Caco-2 (cell line): ENCODE measurements at regions of chr2 and their contacts with region 1.

Region 1: GRCh38 chr2:118855451-118856279 is 8.2 kb upstream of the EN1 start:
- DNase-seq: peak; percentile 65 to 86
- H3K4me3 ChIP-seq: no peak overlapping the region
- H3K4me3 Mint-ChIP-seq: no peak overlapping the region
- H3K27ac Mint-ChIP-seq: no peak overlapping the region
- H3K4me1 ChIP-seq: no peaks in the 10 kb centered on the region
- H3K4me1 Mint-ChIP-seq: no peaks in the 10 kb centered on the region
- H3K27me3 ChIP-seq: no peaks in the 10 kb centered on the region; the same call in 1 of the 2 replicates
- H3K27me3 Mint-ChIP-seq: peaks cover 41% of the 10 kb centered on the region
- CTCF ChIP-seq: peak; percentile 74 to 94

Region 2: DNA sequence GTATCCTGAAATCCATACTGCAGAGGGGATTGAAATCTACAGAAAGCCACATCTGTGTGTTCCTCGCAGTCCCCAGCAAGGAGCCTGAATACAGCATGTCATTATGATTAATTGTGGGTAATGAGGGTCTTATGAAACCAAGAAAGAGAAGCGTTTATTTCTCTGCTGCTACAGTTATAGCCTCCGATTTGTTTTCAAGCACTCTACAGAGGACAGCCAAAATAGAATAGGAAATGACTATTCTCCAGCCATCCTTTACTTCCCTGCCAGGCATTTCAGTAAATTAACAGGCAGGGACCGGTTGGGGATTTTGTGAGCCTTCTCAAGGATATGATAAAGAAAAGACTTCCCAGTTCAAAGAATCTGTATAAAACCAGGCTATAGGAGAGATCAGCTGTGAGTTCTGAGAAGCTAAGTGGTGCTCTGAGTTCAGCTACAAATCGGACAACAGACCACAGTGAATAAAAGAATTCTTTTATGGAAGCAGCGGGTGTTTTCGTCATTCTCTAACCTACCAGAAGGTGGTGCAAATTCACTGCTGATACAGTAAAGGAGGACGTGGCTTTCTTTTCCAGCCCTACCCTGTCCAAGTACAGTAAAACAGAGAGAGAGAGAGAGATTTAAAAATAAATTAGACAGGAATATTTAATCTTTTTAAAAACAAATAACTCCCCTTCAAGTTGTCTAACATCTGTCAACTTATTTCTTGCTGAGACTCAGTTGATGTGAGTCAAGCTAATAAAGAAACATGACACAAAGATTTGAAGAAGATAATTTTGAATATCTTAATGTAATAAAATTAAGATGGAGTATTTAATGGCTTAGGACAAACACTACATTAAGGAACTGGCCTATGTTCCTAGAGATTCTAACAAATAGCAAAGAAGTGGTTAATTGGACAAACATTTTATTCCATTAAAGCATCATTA is 633.7 kb before region 1 on chr2:
- CTCF ChIA-PET with region 1: no interaction called
- POLR2A ChIA-PET with region 1: no interaction called
- intact Hi-C with region 1: loop called (anchors 1 kb)
- DNase-seq: peak in 1 of 2 experiments; percentile 63
- H3K4me3 ChIP-seq: no peak overlapping the region
- H3K4me3 Mint-ChIP-seq: no peak overlapping the region
- H3K27ac Mint-ChIP-seq: no peak overlapping the region
- H3K4me1 ChIP-seq: no peaks in the 10 kb centered on the region
- H3K4me1 Mint-ChIP-seq: no peaks in the 10 kb centered on the region
- H3K27me3 ChIP-seq: peaks cover 4% of the 10 kb centered on the region
- H3K27me3 Mint-ChIP-seq: peaks cover 23% of the 10 kb centered on the region
- CTCF ChIP-seq: peak; percentile 67 to 72

Region 3: GRCh38 chr2:118431165-118431517 is 424.5 kb before region 1 on chr2:
- CTCF ChIA-PET with region 1: interaction called, 3 read pairs
- POLR2A ChIA-PET with region 1: no interaction called
- intact Hi-C with region 1: loop called (anchors 1 kb)
- DNase-seq: no peak
- H3K4me3 ChIP-seq: no peak overlapping the region
- H3K4me3 Mint-ChIP-seq: no peak overlapping the region
- H3K27ac Mint-ChIP-seq: no peak overlapping the region
- H3K4me1 ChIP-seq: no peaks in the 10 kb centered on the region
- H3K4me1 Mint-ChIP-seq: peaks cover 7% of the 10 kb centered on the region
- H3K27me3 ChIP-seq: no peaks in the 10 kb centered on the region
- H3K27me3 Mint-ChIP-seq: no peaks in the 10 kb centered on the region
- CTCF ChIP-seq: no peak

Region 4: DNA sequence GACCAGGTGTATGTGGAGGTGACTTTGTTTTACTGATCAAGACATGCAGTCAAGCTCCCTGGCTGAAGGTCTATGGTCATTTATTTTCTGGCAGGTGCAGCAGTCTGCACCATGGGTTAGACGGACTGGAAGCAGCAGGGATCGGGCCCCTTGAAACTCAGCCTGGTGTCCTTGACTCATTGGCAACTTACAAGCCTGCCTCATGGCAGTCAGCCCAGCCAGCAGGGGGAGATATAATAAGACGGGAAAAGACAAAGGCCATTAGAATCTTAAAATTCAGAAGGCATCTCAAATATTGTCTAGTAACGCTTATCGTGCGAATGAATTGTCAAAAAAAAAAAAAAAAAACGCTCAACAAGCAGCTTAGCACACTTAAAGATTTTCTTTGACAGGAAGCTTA is 316.4 kb before region 1 on chr2:
- CTCF ChIA-PET with region 1: interaction called, 4 read pairs
- POLR2A ChIA-PET with region 1: no interaction called
- intact Hi-C with region 1: loop called (anchors 1 kb)
- DNase-seq: peak; percentile 46 to 55
- H3K4me3 ChIP-seq: no peak overlapping the region
- H3K4me3 Mint-ChIP-seq: no peak overlapping the region
- H3K27ac Mint-ChIP-seq: no peak overlapping the region
- H3K4me1 ChIP-seq: no peaks in the 10 kb centered on the region
- H3K4me1 Mint-ChIP-seq: no peaks in the 10 kb centered on the region
- H3K27me3 ChIP-seq: no peaks in the 10 kb centered on the region; the same call in 1 of the 2 replicates
- H3K27me3 Mint-ChIP-seq: peaks cover 6% of the 10 kb centered on the region
- CTCF ChIP-seq: peak; percentile 44 to 71

Region 5: DNA sequence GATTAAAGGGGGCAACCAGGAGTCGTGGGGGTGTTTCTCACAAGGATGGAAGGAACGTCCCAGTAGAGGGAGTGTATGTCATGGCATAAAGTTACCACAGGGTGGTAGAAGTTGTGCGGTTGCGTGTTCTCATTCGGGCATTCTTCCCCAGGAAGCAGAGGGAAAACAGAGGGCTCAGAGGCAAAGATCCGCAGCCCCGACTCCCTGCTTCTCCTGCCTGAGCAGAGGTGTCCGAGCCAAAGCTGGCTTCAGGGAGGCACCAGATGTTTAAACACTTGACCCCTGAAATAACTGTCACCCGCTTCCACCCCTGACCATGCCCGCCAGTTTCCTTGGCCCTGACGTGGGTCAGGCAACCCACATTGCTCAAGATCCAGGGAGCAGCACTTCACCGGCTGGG is 91.9 kb before region 1 on chr2:
- CTCF ChIA-PET with region 1: interaction called, 4 read pairs
- POLR2A ChIA-PET with region 1: no interaction called
- intact Hi-C with region 1: loop called (anchors 1 kb)
- DNase-seq: peak in 1 of 2 experiments; percentile 19
- H3K4me3 ChIP-seq: no peak overlapping the region
- H3K4me3 Mint-ChIP-seq: no peak overlapping the region
- H3K27ac Mint-ChIP-seq: no peak overlapping the region
- H3K4me1 ChIP-seq: no peaks in the 10 kb centered on the region
- H3K4me1 Mint-ChIP-seq: no peaks in the 10 kb centered on the region
- H3K27me3 ChIP-seq: no peaks in the 10 kb centered on the region; the same call in 1 of the 2 replicates
- H3K27me3 Mint-ChIP-seq: peaks cover 29% of the 10 kb centered on the region
- CTCF ChIP-seq: peak in 1 of 2 experiments; percentile 17